PC-9 (cell line): ENCODE measurements at regions of chr10 and their contacts with region 1.

Region 1: GRCh38 chr10:99788598-99789256 is 6.3 kb downstream of the ABCC2 start:
- DNase-seq: no peak
- H3K4me3 ChIP-seq: no peak overlapping the region
- H3K27ac ChIP-seq: no peak overlapping the region
- H3K4me1 ChIP-seq: peaks cover 37% of the 10 kb centered on the region
- H3K27me3 ChIP-seq: no peaks in the 10 kb centered on the region
- CTCF ChIP-seq: no peak

Region 2: GRCh38 chr10:99430451-99431189 is 358.1 kb before region 1 on chr10 and contains the start of gene GOT1:
- CTCF ChIA-PET with region 1: no interaction called
- POLR2A ChIA-PET with region 1: no interaction called
- intact Hi-C with region 1: loop called (anchors 10 kb)
- DNase-seq: peak; percentile 88 to 96
- H3K4me3 ChIP-seq: peak within 1 kb of the TSS; percentile 88
- H3K27ac ChIP-seq: peak within 1 kb of the TSS; percentile 71
- H3K4me1 ChIP-seq: no peaks in the 10 kb centered on the region
- H3K27me3 ChIP-seq: no peaks in the 10 kb centered on the region
- CTCF ChIP-seq: no peak
- total RNA-seq, gene GOT1: 27.5 and 28.6 TPM in 2 replicates

Region 3: DNA sequence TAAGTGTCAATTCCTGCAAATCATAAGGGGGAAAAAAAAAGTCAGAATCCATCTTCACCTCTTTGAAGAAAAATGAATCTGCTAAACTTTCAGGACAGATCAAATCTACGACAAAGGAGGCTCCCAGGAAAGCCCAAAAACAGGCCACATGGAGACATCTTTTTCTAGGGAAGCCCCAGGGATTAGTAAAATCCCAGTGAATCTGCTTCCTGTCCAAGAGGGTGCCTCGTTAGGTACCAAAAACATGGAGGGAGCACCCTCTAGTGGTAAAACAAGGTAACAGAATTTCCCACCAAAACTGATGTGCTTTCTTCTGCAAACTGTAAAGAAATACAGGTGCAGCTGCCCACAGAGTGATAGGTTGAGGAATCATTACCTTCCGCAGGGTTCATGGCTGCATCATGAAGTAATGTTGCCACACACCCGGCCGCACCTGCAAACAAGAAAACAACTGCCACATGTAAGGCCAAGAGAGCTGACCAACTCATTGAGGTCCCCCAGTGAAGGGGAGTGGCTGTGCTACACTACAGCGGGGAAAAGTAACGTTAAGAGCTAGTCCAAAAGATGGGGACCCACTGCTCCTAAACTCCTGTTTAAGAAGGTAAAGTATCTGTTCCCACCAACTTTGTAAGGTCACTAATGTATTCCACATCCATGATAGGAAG is 176.4 kb before region 1 on chr10:
- CTCF ChIA-PET with region 1: no interaction called
- POLR2A ChIA-PET with region 1: no interaction called
- intact Hi-C with region 1: no loop called
- DNase-seq: peak; percentile 25 to 55
- H3K4me3 ChIP-seq: no peak overlapping the region
- H3K27ac ChIP-seq: no peak overlapping the region
- H3K4me1 ChIP-seq: no peaks in the 10 kb centered on the region
- H3K27me3 ChIP-seq: no peaks in the 10 kb centered on the region
- CTCF ChIP-seq: peak; percentile 80

Region 4: DNA sequence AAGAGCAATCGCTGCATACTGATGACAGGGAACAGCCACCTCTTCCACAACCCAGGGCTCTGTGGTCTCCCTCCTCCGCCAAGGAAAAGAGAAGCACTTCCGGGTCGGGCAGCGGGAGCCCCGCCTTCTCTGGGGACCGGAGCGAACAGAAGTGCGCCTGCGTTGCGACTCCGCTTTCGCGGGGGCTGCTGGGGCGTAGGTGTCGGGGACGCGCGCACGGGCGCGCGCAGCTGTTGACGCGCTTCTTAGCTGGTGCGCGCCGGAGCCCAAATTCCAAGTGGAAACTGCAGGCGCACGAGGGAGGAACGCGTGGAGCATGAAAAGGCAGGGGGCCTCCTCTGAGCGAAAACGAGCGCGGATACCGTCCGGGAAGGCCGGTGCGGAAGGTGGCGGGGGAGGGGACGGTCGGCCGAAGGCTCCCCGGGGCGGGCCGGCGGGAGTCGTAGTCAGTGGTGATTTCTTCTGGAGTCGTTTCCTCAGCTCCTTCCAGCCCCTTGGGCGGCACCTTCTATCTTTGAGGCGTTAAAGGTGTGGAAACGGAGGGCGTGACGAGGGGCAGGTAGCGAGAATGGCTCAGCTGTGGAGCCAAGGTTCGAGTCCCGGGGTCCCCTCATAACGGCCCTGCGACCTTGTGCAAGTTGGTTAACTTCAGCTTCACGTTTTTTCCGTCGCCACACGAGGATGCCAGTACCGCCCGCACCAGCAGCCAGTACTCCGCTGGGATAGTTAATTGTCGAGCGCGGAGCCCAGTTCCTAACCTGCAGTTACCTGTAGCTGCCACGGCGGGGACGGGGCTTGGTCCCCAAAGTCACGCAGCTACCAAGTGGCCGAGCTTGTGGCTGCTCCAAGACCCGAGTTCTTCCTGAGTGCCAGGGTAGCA is 56.5 kb before region 1 on chr10 and contains the starts of genes COX15 and CUTC:
- CTCF ChIA-PET with region 1: no interaction called
- POLR2A ChIA-PET with region 1: no interaction called
- intact Hi-C with region 1: loop called (anchors 1 kb)
- DNase-seq: peak; percentile 87 to 90
- H3K4me3 ChIP-seq: peak within 1 kb of the TSS; percentile 93
- H3K27ac ChIP-seq: peak within 1 kb of the TSS; percentile 86
- H3K4me1 ChIP-seq: peaks cover 10% of the 10 kb centered on the region; the same call in 1 of the 2 replicates
- H3K27me3 ChIP-seq: no peaks in the 10 kb centered on the region
- CTCF ChIP-seq: peak; percentile 64
- total RNA-seq, gene COX15: 31.4 and 35.2 TPM in 2 replicates
- total RNA-seq, gene CUTC: 7.6 and 9.2 TPM in 2 replicates

Region 5: DNA sequence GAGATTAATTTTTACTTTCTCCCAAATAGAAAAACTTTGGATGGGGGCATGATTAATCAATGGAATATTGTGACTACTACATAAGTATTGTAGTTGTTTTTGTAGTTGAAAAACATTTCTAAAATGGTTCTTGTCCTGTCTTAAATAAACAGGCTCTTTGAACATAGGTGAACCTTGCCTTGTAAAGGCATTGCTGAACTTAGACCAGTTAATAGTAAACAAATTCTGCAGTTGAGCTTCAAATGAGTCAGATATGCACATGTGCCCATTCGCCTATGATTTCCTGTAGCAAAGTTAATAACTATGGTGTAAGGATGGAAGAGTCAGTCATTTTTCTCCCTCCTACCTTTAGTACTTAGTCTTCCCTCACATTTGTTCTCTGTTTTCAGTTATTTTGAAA is 34.1 kb before region 1 on chr10:
- CTCF ChIA-PET with region 1: interaction called, 13 read pairs
- POLR2A ChIA-PET with region 1: interaction called, 3 read pairs
- intact Hi-C with region 1: loop called (anchors 5 kb)
- DNase-seq: no peak
- H3K4me3 ChIP-seq: no peak overlapping the region
- H3K27ac ChIP-seq: no peak overlapping the region
- H3K4me1 ChIP-seq: no peaks in the 10 kb centered on the region
- H3K27me3 ChIP-seq: no peaks in the 10 kb centered on the region
- CTCF ChIP-seq: no peak